Endothelial cell of umbilical vein (primary cell): ENCODE measurements at regions of chr6 and their contacts with region 1.

Region 1: GRCh38 chr6:34696739-34697543 is at the start of gene ILRUN:
- DNase-seq: peak; percentile 94
- H3K4me3 ChIP-seq: peak within 1 kb of the TSS; percentile 81 to 92 (median 83)
- H3K27ac ChIP-seq: peak within 1 kb of the TSS; percentile 77
- H3K4me1 ChIP-seq: peaks cover 14% of the 10 kb centered on the region
- H3K27me3 ChIP-seq: no peaks in the 10 kb centered on the region
- CTCF ChIP-seq: no peak
- POLR2A ChIP-seq: peak; percentile 45
- total RNA-seq, gene ILRUN: 47.0 and 48.9 TPM in 2 replicates

Region 2: GRCh38 chr6:34656378-34657036 is 40.4 kb before region 1 on chr6:
- CTCF ChIA-PET with region 1: interaction called, 5 read pairs
- POLR2A ChIA-PET with region 1: interaction called, 4 read pairs
- dilution Hi-C with region 1: no loop called
- intact Hi-C with region 1: loop called (anchors 5 kb)
- DNase-seq: peak; percentile 80
- H3K4me3 ChIP-seq: peak overlapping the region in 1 of 3 experiments; percentile 86
- H3K27ac ChIP-seq: peak overlapping the region; percentile 97
- H3K4me1 ChIP-seq: peaks cover 26% of the 10 kb centered on the region
- H3K27me3 ChIP-seq: no peaks in the 10 kb centered on the region
- CTCF ChIP-seq: no peak
- POLR2A ChIP-seq: no peak